ENCODE measurements at regions of chr16 and their contacts with region 1.

Region 1: GRCh38 chr16:65117811-65118448 is 3.9 kb downstream of the CDH11 start:
- DNase-seq: peak; percentile 53 to 72
- ATAC-seq: peak in 7 of 8 donors; percentile 35 to 70 (median 64)
- H3K4me3 ChIP-seq: no peak overlapping the region
- H3K27ac ChIP-seq: no peak overlapping the region
- H3K4me1 ChIP-seq: peaks cover 0 to 33% (median 9%) of the 10 kb centered on the region in 9 donors
- H3K27me3 ChIP-seq: peaks cover 0 to 41% (median 16%) of the 10 kb centered on the region in 7 donors
- CTCF ChIP-seq: peak; percentile 75 to 93 (median 90)

Region 2: DNA sequence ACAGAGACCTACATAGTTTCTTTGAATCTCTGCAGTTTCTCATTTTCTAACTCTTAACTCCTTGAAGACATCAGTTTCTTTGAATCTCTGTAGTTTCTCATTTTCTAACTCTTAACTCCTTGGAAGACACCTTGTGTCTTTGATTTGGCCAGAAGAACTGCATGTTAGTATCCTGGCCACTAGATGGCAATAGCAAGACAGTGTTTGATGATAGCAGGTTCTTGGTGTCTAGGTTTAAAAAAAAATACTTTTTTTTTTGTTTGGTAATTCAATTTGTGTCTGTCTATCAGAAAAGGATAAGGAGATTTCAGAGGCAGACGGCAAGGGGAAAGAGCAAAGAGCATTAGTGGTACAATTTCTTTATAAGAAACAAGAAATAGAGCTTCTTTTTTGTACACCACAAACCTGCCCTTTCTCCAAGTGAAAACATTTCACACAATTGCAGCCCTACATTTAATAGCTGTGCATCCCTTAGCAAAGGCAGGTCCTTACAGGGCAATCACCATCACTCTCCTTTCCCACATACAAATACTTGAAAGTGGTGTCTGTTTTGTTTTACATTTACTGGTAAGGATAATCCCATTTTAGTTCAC is 1756.8 kb before region 1 on chr16:
- intact Hi-C with region 1: loop called in 2 of 10 experiments (anchors 10 kb)
- DNase-seq: no peak
- ATAC-seq: no peak
- H3K4me3 ChIP-seq: no peak overlapping the region
- H3K27ac ChIP-seq: no peak overlapping the region
- H3K4me1 ChIP-seq: no peaks in the 10 kb centered on the region
- H3K27me3 ChIP-seq: no peaks in the 10 kb centered on the region
- CTCF ChIP-seq: peak; percentile 39 to 84 (median 73)

Region 3: DNA sequence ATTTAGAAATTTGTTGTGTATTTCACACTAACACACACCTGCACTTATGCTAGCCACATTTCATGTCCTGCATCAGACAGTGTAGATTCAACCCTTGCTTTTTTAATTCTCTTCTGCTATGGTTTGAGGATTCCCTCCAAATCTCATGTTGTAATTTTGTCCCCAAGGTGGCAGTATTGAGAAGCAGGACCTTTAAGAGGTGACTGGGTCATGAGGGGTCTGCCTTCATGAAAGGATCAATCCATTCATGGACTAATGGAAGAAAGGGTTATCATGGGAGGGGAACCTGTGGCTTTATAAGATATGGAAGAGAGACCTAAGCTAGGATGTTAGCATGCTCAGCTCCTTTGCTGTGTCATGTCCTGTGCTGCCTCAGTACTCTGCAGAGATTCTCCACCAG is 1028.2 kb before region 1 on chr16:
- intact Hi-C with region 1: loop called in 5 of 10 experiments (anchors 5 to 10 kb)
- DNase-seq: peak in 1 of 2 donors; percentile 8
- ATAC-seq: peak in 2 of 8 donors; percentile 24 to 61
- H3K4me3 ChIP-seq: no peak overlapping the region
- H3K27ac ChIP-seq: no peak overlapping the region
- H3K4me1 ChIP-seq: no peaks in the 10 kb centered on the region
- H3K27me3 ChIP-seq: no peaks in the 10 kb centered on the region
- CTCF ChIP-seq: peak; percentile 31 to 75 (median 55)

Region 4: DNA sequence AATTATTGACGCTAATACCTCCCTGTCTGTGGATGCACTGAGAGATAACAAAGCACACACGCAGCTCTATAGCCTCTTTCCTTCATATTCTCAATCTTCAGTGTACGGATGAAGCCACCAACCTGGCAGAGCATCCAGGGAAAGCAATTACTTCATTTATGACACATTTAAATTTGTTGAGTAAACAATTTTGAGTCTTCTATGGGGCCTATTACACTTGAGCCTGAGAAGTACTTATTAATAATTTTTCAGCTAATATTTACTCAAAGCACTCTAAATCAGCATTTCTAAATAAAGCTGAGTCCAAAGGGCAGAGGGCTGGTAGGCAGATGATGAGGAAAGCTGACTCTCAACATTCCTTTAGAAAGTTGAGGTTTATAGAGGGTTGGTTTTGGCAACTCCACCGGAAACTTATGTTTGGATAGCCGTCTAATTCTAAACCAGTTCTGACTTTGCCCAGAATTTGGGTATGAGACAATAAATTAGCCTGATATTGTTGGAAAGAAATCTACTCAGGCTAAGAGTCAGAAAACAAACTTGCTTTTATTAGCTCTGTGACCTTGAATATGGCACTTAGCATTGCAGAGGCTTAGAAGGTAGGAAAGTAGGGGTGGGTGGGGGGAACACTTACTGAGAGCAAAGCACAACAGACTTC is 639.6 kb before region 1 on chr16:
- intact Hi-C with region 1: loop called in 1 of 10 experiments (anchors 10 kb)
- DNase-seq: no peak
- ATAC-seq: peak in 2 of 8 donors; percentile 8 to 25
- H3K4me3 ChIP-seq: no peak overlapping the region
- H3K27ac ChIP-seq: peak overlapping the region in 1 of 10 donors; percentile 9
- H3K4me1 ChIP-seq: peaks cover 0 to 26% (median 7%) of the 10 kb centered on the region in 9 donors
- H3K27me3 ChIP-seq: no peaks in the 10 kb centered on the region
- CTCF ChIP-seq: no peak

Region 5: DNA sequence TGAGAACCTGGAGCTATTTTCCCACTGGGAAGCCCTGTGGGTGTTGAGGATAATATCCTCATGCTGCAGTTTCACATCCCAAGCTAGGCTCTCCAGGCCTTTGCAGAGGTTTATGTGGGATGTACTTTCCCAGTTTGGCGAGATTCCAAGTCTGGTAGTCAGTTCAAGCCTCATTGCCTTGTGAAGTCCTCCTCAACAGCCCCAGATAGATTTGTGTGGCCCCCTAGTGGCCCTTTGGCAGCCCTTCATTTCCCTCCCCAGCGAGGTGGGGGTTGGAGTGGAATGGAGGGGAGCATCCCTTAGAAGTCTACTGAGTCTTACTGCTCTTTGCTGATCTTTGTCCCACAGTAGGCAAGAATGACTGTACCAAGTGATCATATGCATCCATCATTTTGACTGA is 134.0 kb before region 1 on chr16:
- intact Hi-C with region 1: loop called in 1 of 10 experiments (anchors 5 kb)
- DNase-seq: peak; percentile 19 to 62
- ATAC-seq: peak; percentile 58 to 91 (median 76)
- H3K4me3 ChIP-seq: no peak overlapping the region
- H3K27ac ChIP-seq: no peak overlapping the region
- H3K4me1 ChIP-seq: peaks cover 0 to 21% (median 7%) of the 10 kb centered on the region in 9 donors
- H3K27me3 ChIP-seq: no peaks in the 10 kb centered on the region
- CTCF ChIP-seq: peak; percentile 15 to 60 (median 47)

Region 6: DNA sequence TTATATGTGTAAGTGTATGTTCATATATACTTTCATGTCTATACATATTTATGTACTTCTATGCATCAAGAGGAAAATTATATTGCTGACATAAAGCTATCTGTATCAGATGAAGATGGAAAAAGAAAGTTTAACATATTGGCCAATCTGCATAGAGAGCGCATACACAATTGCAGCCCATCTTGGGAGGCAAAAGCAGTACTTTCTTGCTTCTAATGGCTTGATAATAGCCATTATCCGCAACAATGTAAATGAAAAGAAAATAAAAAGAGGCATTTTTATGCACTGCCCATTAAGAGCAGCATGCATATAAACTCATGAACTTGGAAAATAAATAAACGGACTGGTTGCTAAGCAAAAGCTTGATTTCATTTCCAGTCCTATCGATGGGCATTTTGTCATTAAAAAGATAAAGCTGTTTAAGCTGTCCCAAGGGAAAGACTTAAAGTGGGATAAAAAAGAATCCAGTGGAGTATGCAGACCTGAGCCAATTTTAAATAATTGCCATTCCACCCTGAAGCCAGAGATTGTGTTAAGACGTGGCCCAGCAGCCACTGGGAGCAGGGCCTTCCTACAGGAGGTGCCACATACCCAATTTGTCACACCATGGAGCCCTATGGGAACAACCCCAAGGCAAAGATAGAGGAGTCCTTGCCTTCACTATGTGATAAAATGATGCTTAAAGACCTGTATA is 187.5 kb after region 1 on chr16:
- intact Hi-C with region 1: loop called in 2 of 10 experiments (anchors 10 kb)
- DNase-seq: no peak
- ATAC-seq: peak in 3 of 8 donors; percentile 11 to 36 (median 17)
- H3K4me3 ChIP-seq: no peak overlapping the region
- H3K27ac ChIP-seq: no peak overlapping the region
- H3K4me1 ChIP-seq: peaks cover 0 to 28% (median 0%) of the 10 kb centered on the region in 9 donors
- H3K27me3 ChIP-seq: no peaks in the 10 kb centered on the region
- CTCF ChIP-seq: no peak

Region 7: GRCh38 chr16:66270333-66270927 is 1152.5 kb after region 1 on chr16:
- intact Hi-C with region 1: loop called in 3 of 10 experiments (anchors 5 to 10 kb)
- DNase-seq: peak; percentile 48 to 82
- ATAC-seq: peak; percentile 54 to 85 (median 70)
- H3K4me3 ChIP-seq: peak overlapping the region in 9 of 10 donors; percentile 6 to 50 (median 40)
- H3K27ac ChIP-seq: peak overlapping the region in 8 of 10 donors; percentile 35 to 78 (median 64)
- H3K4me1 ChIP-seq: peaks cover 2 to 36% (median 16%) of the 10 kb centered on the region in 9 donors
- H3K27me3 ChIP-seq: peaks cover 0 to 31% (median 3%) of the 10 kb centered on the region in 7 donors
- CTCF ChIP-seq: peak; percentile 90 to 99 (median 96)

Measured in heart right ventricle (tissue), 16 donors.